Right ventricle myocardium inferior (tissue), 1 donor: ENCODE measurements at regions of chr2 and their contacts with region 1.

Region 1: GRCh38 chr2:108719149-108720044 is at the start of gene RANBP2:
- DNase-seq: peak; percentile 96
- ATAC-seq: peak; percentile 100
- total RNA-seq, gene RANBP2: 48.7 TPM

Region 2: DNA sequence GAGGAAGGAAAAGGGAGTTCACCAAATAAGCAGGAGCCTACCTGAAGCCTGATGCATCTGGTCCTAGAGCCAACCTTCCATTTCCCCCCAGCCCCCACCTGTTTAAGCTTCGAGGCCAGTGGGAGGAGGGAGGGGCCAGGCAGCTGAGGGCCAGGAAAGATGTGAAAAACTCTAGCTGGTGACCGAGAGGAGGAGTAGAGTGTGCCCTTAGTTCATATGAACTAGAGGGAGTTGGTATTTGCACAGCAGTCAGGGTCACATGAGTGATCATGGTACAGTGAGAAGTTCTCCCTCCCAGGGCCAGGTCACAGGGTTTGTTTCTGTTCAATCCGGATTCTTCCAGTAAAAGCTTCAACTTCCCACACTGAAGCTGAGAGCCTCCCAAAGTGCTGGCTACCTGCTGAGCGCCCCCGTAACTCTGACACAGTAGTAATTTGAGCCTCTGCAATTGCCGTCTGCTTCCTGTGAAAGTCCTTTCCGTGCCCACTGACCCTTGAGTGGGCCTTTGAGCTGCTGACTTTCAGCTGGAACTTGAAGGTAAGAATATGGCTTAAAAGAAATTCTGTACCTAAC is 430.8 kb before region 1 on chr2 and contains the start of gene SULT1C2:
- intact Hi-C with region 1: no loop called
- DNase-seq: no peak
- ATAC-seq: no peak
- total RNA-seq, gene SULT1C2: 0.87 TPM

Region 3: DNA sequence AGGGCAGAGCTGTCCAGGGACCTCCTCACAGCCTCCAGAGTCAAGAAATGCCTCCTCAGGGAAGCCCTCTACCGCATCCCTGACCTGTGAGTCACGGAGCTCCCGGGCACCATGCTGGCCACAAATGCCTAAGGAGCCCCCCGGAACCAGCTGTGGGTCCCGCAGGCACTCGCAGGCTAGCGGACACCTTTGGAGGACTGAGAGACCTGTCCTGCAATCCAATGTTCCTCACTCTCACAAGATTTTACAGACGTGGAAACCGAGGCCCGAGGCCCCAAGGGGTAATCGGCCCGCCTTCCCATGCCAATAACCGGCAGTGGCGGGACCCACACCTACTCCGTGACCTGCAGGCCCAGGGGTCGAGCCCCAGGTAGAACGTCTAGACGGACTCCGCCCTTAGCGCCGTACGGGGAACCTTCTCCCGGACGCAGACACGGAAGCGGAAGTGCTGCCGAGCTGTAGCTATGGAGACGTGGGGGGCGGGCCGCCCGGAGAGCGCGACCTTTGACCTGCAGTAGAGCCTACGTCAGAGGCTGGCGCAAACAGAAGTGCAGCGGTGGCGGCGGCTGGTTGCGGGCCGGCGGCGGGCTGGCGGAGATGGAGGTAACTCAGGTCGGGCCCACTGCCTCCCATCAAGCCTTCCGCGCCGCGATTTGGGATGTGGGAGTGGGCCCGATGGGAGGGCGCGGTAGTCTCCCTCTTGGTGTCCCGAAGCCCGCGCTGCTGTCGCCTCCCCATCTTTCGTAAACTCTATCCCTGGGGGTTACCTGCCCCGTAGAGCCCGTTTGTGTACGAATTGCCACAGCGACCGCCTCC is 270.5 kb before region 1 on chr2 and contains the start of gene GCC2:
- intact Hi-C with region 1: loop called (anchors 5 kb)
- DNase-seq: peak; percentile 99
- ATAC-seq: peak; percentile 98
- total RNA-seq, gene GCC2: 24.0 TPM

Region 4: GRCh38 chr2:108485253-108485652 is 234.1 kb before region 1 on chr2:
- intact Hi-C with region 1: no loop called
- DNase-seq: no peak
- ATAC-seq: no peak

Region 5: GRCh38 chr2:108594982-108595464 is 124.4 kb before region 1 on chr2:
- intact Hi-C with region 1: loop called (anchors 5 kb)
- DNase-seq: no peak
- ATAC-seq: peak; percentile 60

Region 6: GRCh38 chr2:108927936-108928659 is 208.7 kb after region 1 on chr2:
- intact Hi-C with region 1: no loop called
- DNase-seq: peak; percentile 21
- ATAC-seq: no peak